ENCODE measurements at regions of chr1 and their contacts with region 1.

Region 1: DNA sequence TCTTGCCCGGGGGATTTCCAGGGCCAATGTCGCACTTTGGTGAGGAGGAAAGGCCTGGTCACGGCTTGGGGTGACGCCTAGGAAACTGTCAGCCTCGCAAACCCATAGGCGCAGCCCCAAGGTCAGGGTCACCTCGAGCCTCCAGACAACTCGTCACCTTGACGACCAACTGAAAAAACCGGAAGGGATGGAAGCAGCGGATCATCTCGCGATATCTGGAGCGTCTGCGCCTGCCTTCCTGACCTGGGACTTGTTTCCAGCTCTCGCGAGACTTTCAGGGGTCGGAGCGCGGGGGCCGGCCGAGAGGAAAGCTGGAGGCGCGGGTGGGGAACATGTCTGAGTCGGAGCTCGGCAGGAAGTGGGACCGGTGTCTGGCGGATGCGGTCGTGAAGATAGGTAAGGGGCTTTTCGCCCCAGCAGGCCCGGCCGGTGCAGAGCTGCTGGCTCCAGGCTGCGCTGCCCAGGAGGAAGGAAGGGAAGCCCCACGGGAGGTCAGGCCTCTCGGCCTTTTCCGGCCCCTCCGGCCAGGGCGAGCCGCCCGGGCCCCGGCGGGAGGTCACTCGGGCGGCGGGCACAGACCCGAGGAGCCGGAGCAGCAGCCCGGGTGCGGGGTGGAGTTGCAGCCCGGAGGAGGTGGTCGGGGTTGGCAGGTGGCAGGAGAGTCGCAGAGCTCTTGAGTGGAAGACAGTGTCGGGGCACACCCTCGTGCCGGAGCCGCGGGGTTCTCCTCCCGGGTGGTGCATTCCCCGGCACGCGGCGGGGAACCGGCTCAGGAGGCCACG is 47.2 kb upstream of the NBL1 start:
- DNase-seq: peak; percentile 99
- ATAC-seq: peak; percentile 89
- H3K4me3 ChIP-seq: peak overlapping the region; percentile 88
- H3K27ac ChIP-seq: peak overlapping the region; percentile 99
- H3K4me1 ChIP-seq: peaks cover 9% of the 10 kb centered on the region
- H3K27me3 ChIP-seq: no peaks in the 10 kb centered on the region
- CTCF ChIP-seq: no peak
- EP300 ChIP-seq: peak; percentile 55 to 58; a peak in 3 of 4 replicates
- POLR2A ChIP-seq: peak; percentile 89
- RAD21 ChIP-seq: no peak

Region 2: DNA sequence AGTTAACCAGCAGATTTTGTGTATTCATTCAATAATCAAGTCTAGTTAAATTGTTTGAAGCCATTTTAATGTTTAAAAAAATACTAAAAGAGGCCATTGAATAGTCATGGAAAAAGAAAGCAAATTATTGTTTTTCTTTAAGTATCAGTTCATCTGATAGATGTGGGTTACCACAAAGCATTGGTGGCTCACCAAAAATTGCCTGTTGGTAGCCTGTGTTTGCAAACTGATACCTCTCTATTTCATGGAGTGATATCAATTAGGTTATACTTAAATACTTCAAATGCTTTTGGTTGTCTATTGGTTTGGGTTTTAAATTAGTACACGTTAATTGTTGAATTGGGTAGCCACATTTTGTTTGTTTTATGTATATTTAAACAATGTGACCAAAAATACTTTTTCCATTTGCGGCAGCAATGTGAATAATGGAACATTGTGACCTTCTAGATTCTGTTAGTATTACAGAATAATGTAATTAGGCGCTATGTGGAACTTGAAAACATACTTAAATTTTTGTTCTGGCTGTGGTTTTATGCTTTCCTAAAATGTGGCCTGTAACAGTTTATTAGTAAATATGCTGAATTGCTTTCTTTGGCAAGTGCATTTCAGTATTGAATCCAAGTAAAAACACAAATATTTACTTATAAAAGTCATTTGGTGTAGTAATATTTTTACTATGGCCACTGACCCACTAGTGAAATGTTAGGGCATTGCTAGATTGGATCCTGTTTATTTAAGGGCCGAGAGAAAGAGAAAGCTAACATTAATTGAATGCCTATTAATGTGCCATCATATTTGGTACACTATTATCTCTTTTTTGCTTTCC is 10.1 kb after region 1 on chr1:
- CTCF ChIA-PET with region 1: interaction called, 5 read pairs
- POLR2A ChIA-PET with region 1: interaction called, 11 read pairs
- RAD21 ChIA-PET with region 1: no interaction called
- SMC1A ChIA-PET with region 1: interaction called, 5 read pairs
- in situ Hi-C with region 1: no loop called
- intact Hi-C with region 1: no loop called
- DNase-seq: no peak
- ATAC-seq: peak; percentile 68
- H3K4me3 ChIP-seq: no peak overlapping the region
- H3K27ac ChIP-seq: no peak overlapping the region
- H3K4me1 ChIP-seq: no peaks in the 10 kb centered on the region; the same call in 1 of the 2 replicates
- H3K27me3 ChIP-seq: no peaks in the 10 kb centered on the region
- CTCF ChIP-seq: no peak
- EP300 ChIP-seq: no peak
- POLR2A ChIP-seq: no peak
- RAD21 ChIP-seq: no peak